Activated CD4-positive, alpha-beta T cell treated with anti-CD3 and anti-CD28 coated beads for 36 hours (primary cell): ENCODE measurements at regions of chr1 and their contacts with region 1.

Region 1: DNA sequence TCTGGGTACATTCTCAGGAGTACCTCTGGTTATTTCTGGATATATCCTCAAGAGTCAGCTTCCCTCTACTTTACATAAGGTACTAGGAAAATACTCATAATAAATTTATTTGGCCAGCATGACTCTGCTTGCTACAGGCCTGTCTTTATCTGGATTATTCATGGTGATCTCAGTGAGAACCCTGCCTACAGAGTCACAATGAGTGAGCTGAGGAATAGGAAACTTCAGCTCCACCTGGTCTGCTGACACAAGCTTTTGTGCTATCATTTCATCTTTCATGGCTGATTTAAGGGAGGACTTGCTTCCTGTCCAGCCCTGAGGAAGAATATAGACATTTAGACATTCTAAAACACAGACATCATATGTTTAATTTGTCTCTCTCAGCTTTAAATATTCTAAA is 19.5 kb upstream of the SUCO start:
- DNase-seq: no peak
- ATAC-seq: no peak
- H3K4me3 Mint-ChIP-seq: no peak overlapping the region
- H3K27ac Mint-ChIP-seq: no peak overlapping the region
- H3K4me1 Mint-ChIP-seq: no peaks in the 10 kb centered on the region
- H3K27me3 Mint-ChIP-seq: peaks cover 2% of the 10 kb centered on the region

Region 2: DNA sequence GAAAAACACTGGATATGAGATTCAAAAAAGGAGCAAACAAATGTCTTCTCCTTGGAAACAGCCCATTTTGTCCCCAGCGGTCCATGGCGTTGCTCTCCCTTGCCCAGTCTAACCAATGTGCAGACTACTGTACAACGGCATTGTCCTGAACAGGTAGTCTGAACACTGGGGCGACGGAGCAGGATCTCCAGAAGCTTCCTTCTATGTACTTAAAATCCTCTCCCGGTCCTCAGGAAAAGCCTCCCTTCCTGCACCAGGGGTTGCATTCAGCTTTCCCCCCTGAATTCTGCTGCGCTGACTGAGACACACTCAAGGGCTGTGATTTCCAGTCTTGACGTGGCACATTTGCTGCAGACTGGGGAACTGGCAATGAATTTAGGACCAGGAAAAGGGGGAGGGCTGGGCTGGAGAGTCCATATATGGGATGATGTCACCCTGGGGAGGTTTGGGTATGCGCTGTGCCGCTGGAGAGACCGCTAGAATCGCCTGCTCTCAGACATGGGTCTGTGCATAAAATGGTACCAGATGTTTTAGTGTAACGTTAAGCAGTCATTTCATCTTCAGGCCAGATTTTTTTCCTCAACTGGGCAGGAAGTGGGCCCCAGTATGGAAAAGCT is 368.9 kb before region 1 on chr1:
- CTCF ChIA-PET with region 1: no interaction called
- POLR2A ChIA-PET with region 1: no interaction called
- intact Hi-C with region 1: no loop called
- DNase-seq: no peak
- ATAC-seq: no peak
- H3K4me3 Mint-ChIP-seq: no peak overlapping the region
- H3K27ac Mint-ChIP-seq: no peak overlapping the region
- H3K4me1 Mint-ChIP-seq: peaks cover 13% of the 10 kb centered on the region
- H3K27me3 Mint-ChIP-seq: no peaks in the 10 kb centered on the region

Region 3: DNA sequence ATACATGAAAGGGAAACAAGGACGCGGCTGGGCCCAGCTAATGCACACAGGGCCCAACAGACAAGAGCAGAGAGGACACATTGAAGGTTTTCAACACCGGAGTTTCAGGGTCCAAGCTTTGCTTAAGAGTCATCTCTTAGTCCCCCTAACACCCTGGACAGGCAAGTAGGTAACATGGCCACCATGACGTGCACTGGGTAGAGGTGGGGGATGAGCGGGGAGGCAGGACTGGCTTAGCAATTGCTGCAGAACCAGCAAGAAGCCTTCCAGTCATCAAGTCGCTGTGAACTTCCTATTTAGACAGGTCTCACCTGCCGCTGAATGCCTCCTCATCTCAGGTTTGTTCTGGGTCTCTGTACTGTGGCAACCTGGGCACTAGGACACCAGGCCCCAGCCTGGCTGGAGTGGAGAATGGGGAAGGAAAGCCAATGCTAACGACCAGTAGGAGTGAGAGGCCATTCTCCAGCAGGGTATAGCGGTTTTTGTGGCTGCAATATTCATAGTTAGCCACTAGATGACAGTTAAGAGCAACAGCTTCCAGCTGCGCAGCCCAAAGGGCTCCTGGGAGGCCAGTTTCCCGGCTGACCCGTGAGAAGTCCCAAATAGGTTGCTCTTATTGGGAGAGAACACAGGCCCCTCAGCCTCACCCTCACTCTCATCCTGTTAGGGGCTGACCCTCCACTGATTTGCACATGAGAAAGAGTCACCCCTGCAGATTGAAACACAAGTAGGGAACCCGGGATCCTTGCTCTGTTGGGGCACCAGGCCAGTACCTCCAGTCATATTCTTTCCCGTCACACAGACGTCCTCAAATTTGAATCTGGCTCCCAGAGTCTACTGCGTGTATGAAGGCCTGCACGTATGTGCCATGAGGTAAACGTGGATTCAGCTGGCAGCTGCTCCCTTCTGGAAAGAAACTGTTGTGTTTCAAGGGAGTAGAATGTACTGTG is 63.6 kb before region 1 on chr1:
- CTCF ChIA-PET with region 1: no interaction called
- POLR2A ChIA-PET with region 1: no interaction called
- intact Hi-C with region 1: loop called in 1 of 2 experiments (anchors 5 kb)
- DNase-seq: peak; percentile 57
- ATAC-seq: peak; percentile 78
- H3K4me3 Mint-ChIP-seq: no peak overlapping the region
- H3K27ac Mint-ChIP-seq: no peak overlapping the region
- H3K4me1 Mint-ChIP-seq: peaks cover 23% of the 10 kb centered on the region
- H3K27me3 Mint-ChIP-seq: no peaks in the 10 kb centered on the region

Region 4: DNA sequence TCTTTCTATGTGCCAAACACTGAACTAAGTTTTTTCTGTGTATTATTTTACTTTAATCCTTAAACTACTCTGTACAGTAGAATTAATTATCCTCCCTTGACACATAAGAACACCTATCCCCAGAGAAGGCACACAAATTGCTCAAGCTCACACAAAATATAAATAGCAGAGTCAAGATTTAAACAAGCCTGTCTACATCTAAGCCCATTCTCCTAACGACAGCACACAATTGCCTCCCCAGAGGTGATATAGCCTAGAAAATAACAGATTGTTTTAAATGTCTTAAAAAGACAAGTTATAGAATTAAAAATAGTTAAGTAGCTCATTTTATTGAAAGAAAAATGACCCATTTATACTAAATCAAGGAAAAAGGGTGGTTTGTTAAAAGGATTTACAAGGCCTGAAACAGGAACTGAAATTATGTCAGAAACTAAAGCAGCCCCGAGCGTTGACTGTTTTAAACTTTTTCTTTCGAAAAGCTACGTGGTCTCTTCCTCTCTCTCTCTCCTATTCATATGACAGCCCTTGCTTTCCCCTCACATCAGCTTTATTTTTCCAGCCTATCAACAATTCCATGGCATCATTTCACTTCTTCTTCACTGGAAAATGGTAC is 506.8 kb after region 1 on chr1:
- CTCF ChIA-PET with region 1: no interaction called
- POLR2A ChIA-PET with region 1: no interaction called
- intact Hi-C with region 1: no loop called
- DNase-seq: no peak
- ATAC-seq: no peak
- H3K4me3 Mint-ChIP-seq: no peak overlapping the region
- H3K27ac Mint-ChIP-seq: no peak overlapping the region
- H3K4me1 Mint-ChIP-seq: no peaks in the 10 kb centered on the region
- H3K27me3 Mint-ChIP-seq: peaks cover 4% of the 10 kb centered on the region